Dorsolateral prefrontal cortex (tissue), 120 donors: ENCODE measurements at regions of chr6 and their contacts with region 1.

Region 1: GRCh38 chr6:52361945-52362442 is at the start of gene PAQR8:
- DNase-seq: peak; percentile 50 to 93 (median 72)
- H3K4me3 ChIP-seq: peak within 1 kb of the TSS; percentile 67 to 100 (median 93)
- H3K27ac ChIP-seq: peak within 1 kb of the TSS; percentile 83 to 99 (median 97)
- H3K27me3 ChIP-seq: no peaks in the 10 kb centered on the region
- CTCF ChIP-seq: peak in 26 of 56 donors; percentile 3 to 57 (median 26)
- total RNA-seq, gene PAQR8: 40.1 to 180 (median 87.5) TPM

Region 2: DNA sequence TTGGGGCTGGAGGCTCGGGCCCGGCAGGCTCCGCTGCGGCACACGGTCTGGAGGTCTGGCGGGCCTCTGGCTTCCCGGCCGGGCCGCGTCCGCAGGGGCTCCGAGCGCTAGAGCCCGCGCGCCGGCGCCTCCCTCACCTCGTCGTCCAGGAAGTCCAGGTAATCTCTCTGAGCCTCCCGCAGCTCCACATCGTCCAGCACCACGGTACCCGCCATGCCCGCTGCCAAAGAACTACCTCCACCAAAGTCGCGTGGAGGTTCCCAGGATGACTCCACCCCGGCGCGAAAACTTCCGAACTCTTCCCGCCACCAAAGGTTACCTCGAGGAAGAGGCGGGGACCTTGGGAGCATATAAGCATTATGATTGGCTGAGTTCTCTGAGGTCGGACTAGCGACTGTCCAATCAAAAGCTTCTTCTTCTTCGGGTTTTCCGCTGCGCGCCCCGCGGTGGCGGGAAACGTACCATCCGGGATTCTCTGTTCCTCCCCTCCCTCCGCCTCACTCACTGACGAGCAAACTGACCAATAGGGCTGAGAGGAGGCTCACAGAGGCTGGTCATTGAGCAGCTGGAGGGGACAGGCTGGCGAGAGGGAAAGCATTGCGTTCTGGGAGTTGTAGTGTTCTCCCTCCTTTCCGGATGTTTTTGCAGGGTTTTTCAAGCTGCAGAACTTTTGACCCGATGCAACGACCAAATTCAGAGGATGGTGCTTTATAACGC is 77.4 kb before region 1 on chr6 and contains the start of gene MCM3:
- intact Hi-C with region 1: loop called (anchors 1 to 5 kb)
- DNase-seq: peak; percentile 93 to 99 (median 98)
- H3K4me3 ChIP-seq: peak within 1 kb of the TSS; percentile 60 to 98 (median 89)
- H3K27ac ChIP-seq: peak within 1 kb of the TSS in 58 of 59 donors; percentile 1 to 93 (median 82)
- H3K27me3 ChIP-seq: no peaks in the 10 kb centered on the region
- CTCF ChIP-seq: peak in 34 of 56 donors; percentile 10 to 63 (median 34)
- total RNA-seq, gene MCM3: 10.8 to 22.0 (median 16.5) TPM

Region 3: DNA sequence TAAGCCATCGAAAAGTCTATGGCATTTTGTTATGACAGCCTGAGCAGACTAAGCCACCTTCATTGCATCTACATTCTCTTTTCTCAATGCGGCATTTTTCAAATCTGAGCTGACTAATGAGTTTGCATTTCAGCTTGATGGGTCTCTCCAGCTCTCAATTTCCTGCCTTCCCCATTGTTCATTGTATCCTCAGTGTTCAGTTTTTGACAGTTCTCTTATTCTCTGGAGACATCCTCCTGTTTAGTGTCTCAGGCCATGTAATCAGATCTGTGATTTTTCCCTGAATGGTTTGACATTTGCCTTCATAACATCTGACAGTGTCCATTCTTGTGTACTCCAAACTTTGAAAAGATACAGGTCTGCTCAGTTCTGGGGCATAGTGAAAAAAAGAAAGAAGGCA is 49.5 kb before region 1 on chr6:
- intact Hi-C with region 1: loop called (anchors 2 to 10 kb)
- DNase-seq: no peak
- H3K4me3 ChIP-seq: peak overlapping the region in 1 of 59 donors; percentile 26
- H3K27ac ChIP-seq: peak overlapping the region in 54 of 59 donors; percentile 5 to 91 (median 70)
- H3K27me3 ChIP-seq: no peaks in the 10 kb centered on the region
- CTCF ChIP-seq: peak in 1 of 56 donors; percentile 10

Region 4: GRCh38 chr6:52317841-52318581 is 44.0 kb before region 1 on chr6:
- intact Hi-C with region 1: loop called (anchors 2 to 10 kb)
- DNase-seq: no peak
- H3K4me3 ChIP-seq: no peak overlapping the region
- H3K27ac ChIP-seq: no peak overlapping the region
- H3K27me3 ChIP-seq: no peaks in the 10 kb centered on the region
- CTCF ChIP-seq: no peak

Region 5: DNA sequence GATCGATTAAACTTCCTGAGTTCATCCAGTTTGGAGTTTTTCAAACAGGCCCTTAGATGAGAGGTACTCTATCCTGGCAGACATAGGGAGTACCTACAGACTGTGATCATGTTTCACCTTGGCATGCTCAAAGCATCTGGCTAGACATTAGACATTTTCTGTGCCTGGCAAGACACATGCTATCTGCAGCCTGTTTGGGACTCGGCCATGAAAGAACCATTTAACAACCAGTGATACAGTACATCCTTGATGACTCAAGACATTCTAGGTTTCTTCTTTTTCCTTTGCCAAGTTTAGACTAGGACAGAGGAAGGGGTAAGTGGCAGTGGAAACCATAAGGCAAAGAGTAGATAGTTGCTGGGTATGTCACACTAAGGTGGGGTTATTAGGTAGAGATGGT is 15.5 kb before region 1 on chr6:
- intact Hi-C with region 1: no loop called
- DNase-seq: no peak
- H3K4me3 ChIP-seq: no peak overlapping the region
- H3K27ac ChIP-seq: no peak overlapping the region
- H3K27me3 ChIP-seq: no peaks in the 10 kb centered on the region
- CTCF ChIP-seq: no peak

Region 6: GRCh38 chr6:52399511-52400312 is 37.7 kb after region 1 on chr6:
- intact Hi-C with region 1: loop called (anchors 5 kb)
- DNase-seq: peak in 1 of 10 donors; percentile 53
- H3K4me3 ChIP-seq: no peak overlapping the region
- H3K27ac ChIP-seq: peak overlapping the region in 56 of 59 donors; percentile 8 to 97 (median 65)
- H3K27me3 ChIP-seq: no peaks in the 10 kb centered on the region
- CTCF ChIP-seq: peak; percentile 67 to 92 (median 83)